Adrenal gland (tissue), 19 donors: ENCODE measurements at regions of chr11 and their contacts with region 1.

Region 1: GRCh38 chr11:68206187-68206601 is 6.9 kb downstream of the KMT5B start:
- DNase-seq: peak in 1 of 7 donors; percentile 32
- H3K4me3 ChIP-seq: no peak overlapping the region
- H3K27ac ChIP-seq: peak overlapping the region in 3 of 5 donors; percentile 2 to 8 (median 8)
- H3K4me1 ChIP-seq: peaks cover 15 to 57% of the 10 kb centered on the region in 2 donors
- H3K27me3 ChIP-seq: no peaks in the 10 kb centered on the region
- CTCF ChIP-seq: peak; percentile 70 to 83 (median 77)
- POLR2A ChIP-seq: no peak

Region 2: DNA sequence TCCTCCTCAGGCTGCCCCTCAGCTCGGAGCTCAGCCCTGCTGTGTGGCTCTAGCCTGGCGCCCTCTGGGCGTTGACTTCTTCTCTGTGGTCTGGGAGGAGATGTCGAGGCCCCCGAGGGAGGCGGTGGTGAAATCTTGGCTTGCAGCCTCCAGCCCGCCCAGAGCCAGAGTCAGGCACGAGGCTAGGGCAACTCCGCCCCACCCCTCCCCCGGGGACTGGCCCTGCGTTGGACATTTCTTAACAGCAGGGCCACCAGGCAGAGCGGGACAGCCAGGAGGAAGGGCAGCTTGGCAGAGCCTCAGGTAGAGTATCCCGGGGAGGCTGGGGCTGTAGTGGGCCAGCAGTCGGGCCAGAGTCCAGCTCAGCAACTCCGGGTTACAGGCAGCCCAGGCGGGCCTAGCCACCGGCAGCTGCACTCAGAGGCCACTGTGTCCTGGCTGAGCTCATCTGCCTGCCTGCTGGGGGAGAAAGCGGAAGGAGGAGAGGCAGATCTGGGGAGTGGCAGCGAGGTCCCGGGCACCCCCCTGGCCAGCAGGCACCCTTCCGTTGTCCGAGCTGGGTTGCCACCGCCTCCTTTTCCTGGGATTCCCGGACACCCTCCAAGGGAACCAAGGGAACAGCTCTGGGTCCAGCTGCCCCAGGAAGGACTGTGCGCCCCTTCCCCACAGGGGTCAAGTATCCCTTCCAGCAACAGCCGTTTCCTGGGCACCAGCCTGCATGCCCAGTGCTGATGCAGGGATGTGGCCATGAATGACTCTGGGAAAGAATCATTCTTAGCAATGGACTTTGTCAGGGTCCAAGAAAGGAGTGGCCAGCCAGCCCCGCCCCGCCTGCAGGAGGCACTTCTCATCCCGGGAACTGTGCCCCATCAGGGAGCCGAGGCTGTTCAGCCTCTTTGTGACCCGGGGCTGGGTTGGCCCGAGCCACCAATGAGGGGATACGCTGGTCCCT is 195.8 kb before region 1 on chr11 and contains the start of gene ALDH3B1:
- intact Hi-C with region 1: loop called in 1 of 2 experiments (anchors 10 kb)
- DNase-seq: peak; percentile 88 to 98 (median 97)
- H3K4me3 ChIP-seq: peak within 1 kb of the TSS in 2 of 4 donors; percentile 10 to 51
- H3K27ac ChIP-seq: peak within 1 kb of the TSS; percentile 90 to 99 (median 92)
- H3K4me1 ChIP-seq: peaks cover 51 to 68% of the 10 kb centered on the region in 2 donors
- H3K27me3 ChIP-seq: no peaks in the 10 kb centered on the region
- CTCF ChIP-seq: peak in 1 of 6 experiments; percentile 19
- POLR2A ChIP-seq: peak; percentile 67 to 93
- total RNA-seq, gene ALDH3B1: 0.72 to 70.3 (median 55.0) TPM

Region 3: DNA sequence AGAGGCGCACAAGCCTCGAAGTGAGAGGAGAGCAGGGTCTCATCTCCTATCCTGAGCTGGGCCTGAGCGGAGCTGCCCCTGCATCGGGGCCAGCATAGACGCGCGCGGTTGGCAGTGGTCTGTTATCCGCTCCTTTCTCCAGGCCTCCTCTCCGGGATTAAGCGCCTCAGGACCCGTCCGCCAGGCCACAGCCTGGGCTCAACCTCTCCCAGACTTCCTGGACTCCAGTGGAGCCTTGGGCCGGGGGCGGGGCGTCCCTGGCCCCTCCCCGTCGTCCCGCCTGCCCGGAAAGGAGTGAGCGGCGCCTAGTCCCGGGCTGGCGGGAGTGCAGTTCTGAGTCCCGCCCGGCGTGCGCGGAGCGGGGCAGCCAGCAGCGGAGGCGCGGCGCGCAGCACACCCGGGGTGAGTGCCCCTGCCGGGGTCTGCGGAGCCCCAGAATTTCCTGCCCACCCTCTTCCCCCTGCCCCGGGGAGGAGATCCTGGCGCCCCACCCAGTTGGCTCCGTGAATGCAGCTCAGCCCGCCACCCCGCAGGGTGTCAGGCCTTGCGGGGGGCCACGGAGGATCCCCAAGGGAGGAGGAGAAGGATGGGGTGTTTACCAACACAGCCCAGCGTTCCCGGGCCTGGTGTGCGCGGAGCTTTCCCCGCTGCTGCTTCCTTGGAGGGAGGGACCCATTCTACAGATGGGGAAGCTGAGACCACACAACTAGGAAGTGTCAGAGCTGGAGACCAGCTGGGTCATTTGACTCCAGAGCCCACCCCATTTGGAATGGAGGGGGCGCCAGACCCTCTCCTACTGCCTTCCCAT is 167.3 kb before region 1 on chr11 and contains the start of gene TCIRG1:
- intact Hi-C with region 1: loop called in 1 of 2 experiments (anchors 10 kb)
- DNase-seq: peak; percentile 88 to 93 (median 91)
- H3K4me3 ChIP-seq: peak within 1 kb of the TSS; percentile 60 to 95 (median 92)
- H3K27ac ChIP-seq: peak within 1 kb of the TSS; percentile 78 to 97 (median 92)
- H3K4me1 ChIP-seq: peaks cover 56 to 79% of the 10 kb centered on the region in 2 donors
- H3K27me3 ChIP-seq: no peaks in the 10 kb centered on the region
- CTCF ChIP-seq: peak in 1 of 6 experiments; percentile 37
- POLR2A ChIP-seq: peak; percentile 91 to 97
- total RNA-seq, gene TCIRG1: 57.0 to 384 (median 257) TPM

Region 4: GRCh38 chr11:68146704-68147474 is 59.3 kb before region 1 on chr11:
- intact Hi-C with region 1: no loop called
- DNase-seq: peak; percentile 50 to 84 (median 81)
- H3K4me3 ChIP-seq: no peak overlapping the region
- H3K27ac ChIP-seq: peak overlapping the region; percentile 21 to 78 (median 76)
- H3K4me1 ChIP-seq: peaks cover 25 to 33% of the 10 kb centered on the region in 2 donors
- H3K27me3 ChIP-seq: no peaks in the 10 kb centered on the region
- CTCF ChIP-seq: no peak
- POLR2A ChIP-seq: peak in 1 of 2 donors; percentile 68

Region 5: GRCh38 chr11:68159665-68160064 is 46.5 kb before region 1 on chr11:
- intact Hi-C with region 1: no loop called
- DNase-seq: peak in 1 of 7 donors; percentile 18
- H3K4me3 ChIP-seq: no peak overlapping the region
- H3K27ac ChIP-seq: no peak overlapping the region
- H3K4me1 ChIP-seq: peaks cover 3 to 12% of the 10 kb centered on the region in 2 donors
- H3K27me3 ChIP-seq: no peaks in the 10 kb centered on the region
- CTCF ChIP-seq: no peak
- POLR2A ChIP-seq: no peak